Aorta (tissue), 5 donors: ENCODE measurements at regions of chr1 and their contacts with region 1.

Region 1: DNA sequence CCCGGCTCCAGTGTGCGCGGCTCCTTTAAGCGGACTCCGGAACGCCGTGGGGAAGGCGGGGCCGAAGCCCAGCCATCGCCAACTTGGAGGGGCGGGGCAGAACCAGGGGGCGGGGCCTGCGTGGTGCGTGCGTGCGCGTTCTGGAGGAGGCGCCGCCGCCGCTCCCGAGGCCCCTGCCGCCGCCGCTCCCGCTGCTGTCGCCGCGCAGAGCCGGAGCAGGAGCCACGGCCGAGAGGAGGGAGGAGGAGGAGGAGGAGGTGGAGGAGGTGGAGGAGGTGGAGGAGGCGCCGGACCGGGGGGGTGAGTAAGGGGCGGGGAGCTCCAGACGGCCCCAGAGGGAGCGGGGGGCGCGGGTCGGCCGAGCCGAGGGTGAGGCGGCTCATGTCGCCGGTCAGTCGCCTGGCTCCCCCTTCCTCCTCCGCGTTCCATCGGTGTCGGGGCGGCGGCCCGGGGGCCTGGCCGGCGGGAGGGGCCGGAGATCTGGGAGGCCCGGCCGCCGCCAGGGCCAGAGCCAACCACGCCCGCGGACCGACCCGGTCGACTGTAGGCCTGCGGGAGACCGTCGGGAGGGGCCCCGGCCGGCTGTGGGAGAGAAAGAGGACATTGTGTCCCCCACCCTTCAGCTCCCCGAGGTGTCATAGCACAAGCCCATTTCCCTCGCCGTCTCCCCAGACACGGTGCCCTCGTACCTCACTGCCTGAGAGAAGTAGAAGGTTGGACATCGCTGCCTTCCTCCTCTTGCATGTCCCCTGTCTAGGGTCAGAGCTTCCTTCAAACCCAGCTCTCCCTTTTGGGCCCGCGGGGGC is at the start of gene RAP1A:
- DNase-seq: peak; percentile 96 to 99
- ATAC-seq: peak; percentile 98
- H3K4me3 ChIP-seq: peak within 1 kb of the TSS; percentile 71 to 92
- H3K27ac ChIP-seq: peak within 1 kb of the TSS; percentile 85 to 90
- H3K4me1 ChIP-seq: peaks cover 0 to 8% of the 10 kb centered on the region in 2 donors
- H3K27me3 ChIP-seq: no peaks in the 10 kb centered on the region
- total RNA-seq, gene RAP1A: 125 to 174 TPM

Region 2: GRCh38 chr1:111161843-111162487 is 457.9 kb before region 1 on chr1:
- intact Hi-C with region 1: no loop called
- DNase-seq: no peak
- ATAC-seq: no peak
- H3K4me3 ChIP-seq: no peak overlapping the region
- H3K27ac ChIP-seq: no peak overlapping the region
- H3K4me1 ChIP-seq: no peaks in the 10 kb centered on the region
- H3K27me3 ChIP-seq: no peaks in the 10 kb centered on the region

Region 3: DNA sequence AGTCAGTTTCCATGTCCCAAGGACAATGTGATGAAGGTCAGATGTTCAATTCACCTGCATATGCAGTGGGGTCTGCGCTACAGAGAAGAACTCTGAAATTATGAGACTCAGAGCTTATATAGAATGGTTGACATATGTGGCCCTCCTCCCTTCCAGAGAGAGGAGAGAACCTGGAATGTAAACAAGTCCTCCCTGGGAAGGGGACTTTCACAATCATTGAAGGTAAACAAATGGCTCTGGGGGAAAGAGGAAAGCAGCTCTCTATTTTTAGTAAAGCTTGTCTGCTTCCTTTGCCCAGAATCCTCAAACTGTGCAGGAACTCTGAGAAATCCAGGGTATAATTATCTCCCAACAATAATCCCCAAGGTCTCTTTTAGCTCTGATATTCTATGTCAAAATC is 202.1 kb before region 1 on chr1:
- intact Hi-C with region 1: no loop called
- DNase-seq: no peak
- ATAC-seq: no peak
- H3K4me3 ChIP-seq: no peak overlapping the region
- H3K27ac ChIP-seq: no peak overlapping the region
- H3K4me1 ChIP-seq: no peaks in the 10 kb centered on the region
- H3K27me3 ChIP-seq: no peaks in the 10 kb centered on the region

Region 4: GRCh38 chr1:111448918-111449702 is 170.7 kb before region 1 on chr1 and contains the starts of genes ATP5PB and WDR77:
- intact Hi-C with region 1: no loop called
- DNase-seq: peak; percentile 96 to 97
- ATAC-seq: peak; percentile 99
- H3K4me3 ChIP-seq: peak within 1 kb of the TSS; percentile 59 to 99
- H3K27ac ChIP-seq: peak within 1 kb of the TSS in 1 of 2 donors; percentile 61
- H3K4me1 ChIP-seq: peaks cover 0 to 8% of the 10 kb centered on the region in 2 donors
- H3K27me3 ChIP-seq: no peaks in the 10 kb centered on the region
- total RNA-seq, gene ATP5PB: 110 TPM
- total RNA-seq, gene WDR77: 17.1 to 17.4 TPM

Region 5: GRCh38 chr1:111507411-111508201 is 112.2 kb before region 1 on chr1:
- intact Hi-C with region 1: loop called in 1 of 2 experiments (anchors 5 kb)
- DNase-seq: peak; percentile 91 to 93
- ATAC-seq: peak; percentile 82
- H3K4me3 ChIP-seq: no peak overlapping the region
- H3K27ac ChIP-seq: peak overlapping the region; percentile 83 to 94
- H3K4me1 ChIP-seq: peaks cover 0 to 4% of the 10 kb centered on the region in 2 donors
- H3K27me3 ChIP-seq: no peaks in the 10 kb centered on the region

Region 6: DNA sequence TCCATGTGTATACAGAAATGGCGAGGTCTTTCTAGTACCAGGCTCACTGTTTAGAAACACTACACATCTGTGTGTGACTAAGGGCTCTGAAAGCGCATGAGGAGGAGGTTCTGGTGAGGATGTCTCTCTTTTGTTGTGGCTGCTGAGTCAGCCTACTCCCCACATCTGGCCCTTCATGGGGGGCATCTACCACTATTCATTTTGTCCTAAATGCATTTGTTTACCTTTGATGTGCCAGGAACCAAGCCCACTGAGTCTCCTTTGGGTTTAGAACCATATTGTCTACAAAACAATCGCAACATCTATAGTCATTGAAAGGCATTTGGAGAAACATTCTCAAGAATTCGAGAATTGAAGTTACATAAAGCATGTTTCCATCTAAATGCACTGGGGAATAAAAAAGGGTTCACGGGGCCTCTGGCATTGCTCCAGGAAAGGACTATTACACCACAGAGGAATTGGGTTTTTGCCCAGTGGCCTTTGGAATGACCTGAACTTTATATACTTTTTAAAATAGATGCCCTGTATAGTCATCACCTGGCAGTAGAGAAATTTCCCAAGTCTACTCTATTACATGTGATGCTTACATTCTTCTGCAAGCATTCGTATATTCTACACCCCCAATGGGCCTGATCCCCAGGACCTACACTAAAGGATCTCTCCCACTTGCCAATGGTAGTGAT is 81.4 kb before region 1 on chr1:
- intact Hi-C with region 1: loop called in 1 of 2 experiments (anchors 5 kb)
- DNase-seq: no peak
- ATAC-seq: no peak
- H3K4me3 ChIP-seq: no peak overlapping the region
- H3K27ac ChIP-seq: no peak overlapping the region
- H3K4me1 ChIP-seq: peaks cover 3 to 10% of the 10 kb centered on the region in 2 donors
- H3K27me3 ChIP-seq: no peaks in the 10 kb centered on the region

Region 7: GRCh38 chr1:111592389-111593361 is 27.2 kb before region 1 on chr1:
- intact Hi-C with region 1: loop called in 1 of 2 experiments (anchors 2 kb)
- DNase-seq: peak; percentile 94 to 95
- ATAC-seq: peak; percentile 93
- H3K4me3 ChIP-seq: no peak overlapping the region
- H3K27ac ChIP-seq: peak overlapping the region; percentile 95 to 96
- H3K4me1 ChIP-seq: peaks cover 2 to 11% of the 10 kb centered on the region in 2 donors
- H3K27me3 ChIP-seq: no peaks in the 10 kb centered on the region

Region 8: DNA sequence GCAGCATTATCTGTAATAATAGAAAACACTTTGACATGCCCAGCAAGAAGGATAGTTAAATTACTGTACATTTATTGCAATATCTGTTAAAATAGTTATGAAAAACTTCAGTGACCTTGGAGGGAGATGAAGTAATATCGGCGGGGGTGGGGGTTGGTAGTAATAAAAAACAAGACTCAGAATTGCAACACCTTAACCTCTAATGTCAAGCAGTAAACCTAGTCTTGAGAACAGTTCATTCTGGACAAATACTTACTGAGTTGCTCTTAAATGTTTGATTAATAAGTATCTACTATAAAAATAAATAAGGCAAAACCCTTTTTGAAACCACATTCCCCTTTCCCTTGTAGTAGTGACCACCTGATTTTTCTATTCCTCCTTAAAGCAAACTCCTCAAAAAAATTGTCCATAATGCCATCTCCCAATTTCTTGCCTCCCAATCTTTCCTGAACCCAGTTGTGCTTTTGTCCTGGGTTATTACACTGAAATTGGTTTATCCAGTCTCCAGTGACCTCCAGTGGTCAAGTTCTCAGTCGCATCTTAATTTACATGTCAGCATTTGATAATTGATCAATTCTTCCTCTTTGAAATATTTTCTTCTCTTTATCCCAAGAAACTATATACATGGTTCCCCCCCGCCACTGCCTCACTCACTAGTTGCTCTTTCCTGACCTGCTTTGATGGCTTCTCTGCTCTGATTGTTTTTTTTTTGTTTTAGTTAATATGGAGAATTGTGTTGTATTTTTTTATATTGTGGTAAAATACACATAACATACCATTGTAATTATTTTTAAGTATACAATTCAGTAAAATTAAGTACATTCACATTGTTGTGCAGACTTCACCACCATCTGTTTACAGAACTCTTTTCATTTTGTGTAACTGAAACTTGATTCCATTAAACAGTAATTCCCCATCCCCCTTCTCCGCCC is 36.5 kb after region 1 on chr1:
- intact Hi-C with region 1: loop called in 1 of 2 experiments (anchors 5 kb)
- DNase-seq: no peak
- ATAC-seq: peak; percentile 80
- H3K4me3 ChIP-seq: no peak overlapping the region
- H3K27ac ChIP-seq: no peak overlapping the region
- H3K4me1 ChIP-seq: peaks cover 2 to 5% of the 10 kb centered on the region in 2 donors
- H3K27me3 ChIP-seq: no peaks in the 10 kb centered on the region

Region 9: DNA sequence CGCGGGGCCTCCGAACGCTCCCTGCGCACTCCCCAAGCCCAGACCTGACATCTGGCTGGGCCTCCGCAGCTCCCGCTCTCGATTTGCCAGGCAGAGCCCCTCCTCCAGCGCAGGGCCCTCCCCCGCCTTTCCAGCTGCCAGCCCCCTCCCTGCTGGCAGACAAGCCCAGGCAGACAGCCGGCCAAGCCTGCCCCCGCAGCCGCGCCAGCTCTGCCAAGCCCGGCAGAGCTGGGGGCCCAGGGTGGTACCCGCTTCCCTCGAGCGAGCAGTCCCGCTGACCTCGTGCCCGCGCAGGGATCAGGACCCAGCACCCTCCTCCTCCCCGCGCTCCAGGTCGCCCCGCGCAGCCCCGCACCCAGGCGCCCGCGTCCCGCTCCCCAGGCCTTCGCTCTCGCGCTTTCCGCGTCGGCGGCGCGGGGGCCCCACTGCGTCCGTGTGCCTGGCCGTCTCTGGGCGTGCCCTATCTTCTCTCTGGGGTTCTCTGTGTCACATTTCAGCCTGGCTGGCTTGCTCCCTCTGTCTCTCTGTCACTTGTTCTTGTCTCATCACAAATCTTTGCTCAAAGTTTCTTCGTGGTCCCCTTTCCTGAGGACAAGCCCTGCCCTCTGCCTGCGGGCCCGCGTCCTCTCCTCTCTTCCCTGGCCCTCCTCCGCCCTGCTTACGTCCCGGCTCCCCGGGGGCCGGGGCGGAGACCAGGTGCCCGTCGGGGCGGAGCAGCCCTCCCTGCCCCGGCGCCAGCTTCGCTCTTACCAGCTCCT is 118.8 kb after region 1 on chr1:
- intact Hi-C with region 1: loop called in 1 of 2 experiments (anchors 1 kb)
- DNase-seq: peak; percentile 86 to 92
- ATAC-seq: peak; percentile 75
- H3K4me3 ChIP-seq: peak overlapping the region; percentile 47 to 74
- H3K27ac ChIP-seq: peak overlapping the region; percentile 15 to 95
- H3K4me1 ChIP-seq: no peaks in the 10 kb centered on the region
- H3K27me3 ChIP-seq: no peaks in the 10 kb centered on the region